ENCODE measurements at regions of chr14 and their contacts with region 1.

Region 1: DNA sequence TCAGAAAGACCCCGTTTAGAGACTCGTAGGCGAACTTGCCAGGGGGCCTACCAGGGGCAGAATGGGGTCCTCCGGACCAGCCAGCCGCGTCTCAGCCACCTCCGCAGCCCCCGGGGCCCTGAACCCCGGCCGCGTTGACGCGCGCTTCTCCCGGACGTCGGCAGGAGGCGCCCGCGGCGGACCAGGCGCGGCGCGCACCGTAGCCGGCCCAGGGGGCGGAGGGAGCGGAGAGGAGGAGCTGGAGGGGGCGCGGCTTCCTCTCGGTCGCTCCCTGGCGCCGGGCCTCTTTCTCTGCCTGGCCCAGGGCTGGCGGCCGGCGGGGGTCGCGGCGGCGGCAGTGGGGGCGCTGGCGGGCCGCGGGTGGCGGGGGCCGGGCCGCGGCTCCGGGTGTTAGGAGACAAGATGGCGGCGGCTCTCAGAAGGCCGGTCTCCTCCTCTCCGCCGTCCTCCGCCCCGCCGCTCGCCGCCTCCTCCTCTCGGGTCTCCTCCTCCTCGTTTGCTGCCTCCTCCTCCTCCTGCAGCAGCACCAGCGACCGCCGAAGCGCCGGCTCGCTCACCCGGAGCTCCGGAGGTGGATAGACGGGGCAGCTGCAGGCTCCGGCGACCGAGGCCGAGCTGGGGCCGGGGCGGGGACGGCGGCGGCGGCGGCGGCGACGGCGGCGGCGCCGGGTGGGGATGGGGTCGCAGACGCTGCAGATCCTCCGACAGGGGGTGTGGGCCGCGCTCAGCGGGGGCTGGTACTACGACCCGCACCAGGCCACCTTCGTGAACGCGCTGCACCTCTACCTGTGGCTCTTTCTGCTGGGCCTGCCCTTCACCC is at the start of gene PCNX1:
- DNase-seq: peak; percentile 94
- H3K4me3 ChIP-seq: peak within 1 kb of the TSS; percentile 80 to 98 (median 88)
- H3K27ac ChIP-seq: peak within 1 kb of the TSS; percentile 87 to 98 (median 94)
- H3K4me1 ChIP-seq: peaks cover 0 to 61% (median 58%) of the 10 kb centered on the region in 4 donors
- H3K27me3 ChIP-seq: no peaks in the 10 kb centered on the region
- CTCF ChIP-seq: peak; percentile 45 to 88 (median 78)
- EP300 ChIP-seq: no peak
- POLR2A ChIP-seq: peak in 1 of 2 donors; percentile 9
- total RNA-seq, gene PCNX1: 62.8 to 73.9 (median 70.1) TPM

Region 2: DNA sequence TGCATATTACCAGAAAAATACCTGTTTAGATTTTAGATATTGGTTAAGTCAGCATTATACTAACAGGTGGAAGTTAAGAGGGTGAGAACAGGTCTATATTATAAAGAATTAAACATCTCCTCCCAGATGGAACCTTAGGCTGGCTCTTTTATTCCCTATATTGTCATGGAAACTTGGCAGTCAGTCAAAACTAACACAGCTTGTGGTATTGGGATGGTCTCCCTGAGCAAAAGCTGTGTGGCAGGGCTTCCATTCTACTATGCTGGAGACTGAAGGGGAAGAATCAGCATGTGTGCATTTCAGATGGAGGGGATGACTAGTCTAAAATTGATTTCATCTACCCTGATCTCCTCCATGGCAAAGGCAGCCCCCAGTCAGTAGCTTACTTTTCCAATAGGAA is 961.5 kb before region 1 on chr14:
- intact Hi-C with region 1: no loop called
- DNase-seq: no peak
- H3K4me3 ChIP-seq: no peak overlapping the region
- H3K27ac ChIP-seq: no peak overlapping the region
- H3K4me1 ChIP-seq: no peaks in the 10 kb centered on the region
- H3K27me3 ChIP-seq: peaks cover 0 to 17% (median 0%) of the 10 kb centered on the region in 3 donors
- CTCF ChIP-seq: no peak
- EP300 ChIP-seq: no peak
- POLR2A ChIP-seq: no peak

Region 3: GRCh38 chr14:70803321-70804310 is 103.8 kb before region 1 on chr14:
- intact Hi-C with region 1: no loop called
- DNase-seq: no peak
- H3K4me3 ChIP-seq: no peak overlapping the region
- H3K27ac ChIP-seq: no peak overlapping the region
- H3K4me1 ChIP-seq: peaks cover 0 to 8% (median 7%) of the 10 kb centered on the region in 4 donors
- H3K27me3 ChIP-seq: peaks cover under 1 to 52% (median 30%) of the 10 kb centered on the region in 3 donors
- CTCF ChIP-seq: no peak
- EP300 ChIP-seq: no peak
- POLR2A ChIP-seq: no peak

Region 4: DNA sequence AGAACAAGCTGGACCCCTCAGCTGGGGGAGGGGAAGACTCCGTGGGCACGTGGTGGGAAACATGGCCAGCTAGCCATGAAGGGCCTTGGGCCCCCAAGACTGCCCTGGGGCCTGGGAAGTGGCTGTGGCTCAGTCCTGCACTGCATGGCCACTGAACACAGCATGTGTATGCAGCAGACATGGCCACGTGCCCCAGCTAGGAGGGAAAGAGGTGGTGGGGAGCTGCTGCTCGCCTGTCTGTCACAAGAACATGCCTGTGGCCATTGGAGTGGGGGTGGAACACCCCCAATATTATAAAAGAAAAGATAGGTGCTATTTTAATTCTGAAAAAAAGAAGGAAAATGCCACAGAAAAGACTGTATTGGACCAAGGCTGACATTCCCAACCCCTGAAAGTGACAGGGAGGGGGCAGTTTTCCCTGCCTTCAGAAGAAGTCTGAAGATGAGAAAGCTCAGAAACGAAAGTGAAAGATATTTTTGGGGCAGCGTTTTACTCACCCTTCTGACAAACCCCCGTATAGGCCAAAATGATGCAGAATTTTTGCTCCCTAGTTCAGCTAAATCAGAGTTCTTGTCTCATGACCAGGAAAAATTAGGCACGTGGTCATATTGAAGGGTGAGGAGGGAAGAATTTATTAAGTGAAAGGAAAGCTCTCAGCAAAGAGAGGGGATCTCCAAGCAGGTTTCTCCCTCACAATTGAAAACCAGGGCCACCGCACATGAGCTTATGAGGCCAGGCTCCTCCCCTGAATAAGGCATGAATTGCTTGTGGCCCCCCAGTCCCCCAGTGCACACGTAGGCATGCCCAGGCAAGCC is 35.3 kb before region 1 on chr14:
- intact Hi-C with region 1: no loop called
- DNase-seq: no peak
- H3K4me3 ChIP-seq: peak overlapping the region in 1 of 4 donors; percentile 4
- H3K27ac ChIP-seq: no peak overlapping the region
- H3K4me1 ChIP-seq: no peaks in the 10 kb centered on the region
- H3K27me3 ChIP-seq: no peaks in the 10 kb centered on the region
- CTCF ChIP-seq: no peak
- EP300 ChIP-seq: no peak
- POLR2A ChIP-seq: no peak

Region 5: DNA sequence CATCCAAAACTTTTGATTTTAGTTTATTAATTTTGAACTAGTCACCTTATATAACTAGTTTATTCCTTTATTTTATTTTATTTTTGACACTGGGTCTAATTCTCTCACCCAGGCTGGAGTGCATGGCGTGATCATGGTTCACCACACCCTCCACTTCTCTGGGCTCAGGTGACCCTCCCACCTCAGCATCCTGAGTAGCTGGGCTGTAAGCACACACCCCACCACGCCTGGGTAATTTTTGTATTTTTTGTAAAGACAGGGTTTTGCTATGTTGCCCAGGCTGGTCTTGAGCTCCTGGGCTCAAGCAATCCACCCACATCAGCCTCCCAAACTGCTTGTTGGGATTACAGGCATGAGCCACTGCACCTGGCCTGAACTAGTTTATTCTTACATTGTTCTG is 17.1 kb after region 1 on chr14:
- intact Hi-C with region 1: loop called (anchors 2 kb)
- DNase-seq: no peak
- H3K4me3 ChIP-seq: no peak overlapping the region
- H3K27ac ChIP-seq: no peak overlapping the region
- H3K4me1 ChIP-seq: peaks cover 0 to 50% (median 31%) of the 10 kb centered on the region in 4 donors
- H3K27me3 ChIP-seq: no peaks in the 10 kb centered on the region
- CTCF ChIP-seq: no peak
- EP300 ChIP-seq: no peak
- POLR2A ChIP-seq: no peak

Region 6: DNA sequence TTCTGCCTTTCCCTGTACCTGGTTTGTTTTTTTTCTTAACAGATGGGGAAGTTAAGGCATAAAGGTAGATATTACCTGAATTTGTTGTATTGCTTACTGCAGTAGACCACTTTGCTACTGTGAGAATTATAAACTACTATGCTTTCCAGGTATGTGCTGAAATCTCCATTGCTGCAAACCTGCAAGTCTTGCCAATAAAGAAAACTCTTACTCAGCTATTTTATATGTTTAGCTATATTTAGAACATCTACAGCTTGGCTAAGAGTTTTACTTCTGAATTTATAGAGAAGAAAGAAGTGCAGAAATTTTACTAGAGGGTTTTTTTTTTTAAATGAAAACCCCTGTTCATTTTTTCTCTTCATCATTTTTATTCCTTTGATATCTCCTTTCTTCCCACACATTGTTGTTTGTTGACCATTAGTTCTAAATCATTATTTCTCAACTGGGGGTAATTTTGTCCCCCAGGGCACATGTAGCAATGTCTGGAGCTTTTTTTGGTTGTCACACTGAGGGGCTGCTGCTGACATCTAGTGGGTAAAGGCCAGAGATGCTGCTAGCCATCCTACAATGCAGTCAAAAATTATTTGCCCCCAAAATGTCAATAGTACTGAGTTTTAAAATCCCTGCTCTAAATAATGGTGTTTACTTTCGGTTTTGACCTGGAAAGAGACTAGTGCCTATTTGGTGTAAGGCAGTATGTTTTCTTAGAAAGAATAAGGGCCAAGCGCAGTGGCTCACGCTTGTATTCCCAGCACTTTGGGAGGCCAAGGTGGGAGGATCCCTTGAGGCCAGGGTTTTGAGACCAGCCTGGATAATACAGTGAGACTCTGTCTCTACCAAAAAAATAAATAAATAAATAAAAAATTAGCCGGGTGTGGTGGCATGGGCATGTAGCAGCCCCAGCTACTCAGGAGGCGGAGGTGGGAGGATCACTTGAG is 48.4 kb after region 1 on chr14:
- intact Hi-C with region 1: loop called (anchors 5 kb)
- DNase-seq: no peak
- H3K4me3 ChIP-seq: no peak overlapping the region
- H3K27ac ChIP-seq: no peak overlapping the region
- H3K4me1 ChIP-seq: peaks cover 0 to 17% (median 14%) of the 10 kb centered on the region in 4 donors
- H3K27me3 ChIP-seq: no peaks in the 10 kb centered on the region
- CTCF ChIP-seq: peak in 2 of 4 experiments; percentile 17 to 39
- EP300 ChIP-seq: no peak
- POLR2A ChIP-seq: no peak